ENCODE measurements at regions of chr9 and their contacts with region 1.

Region 1: DNA sequence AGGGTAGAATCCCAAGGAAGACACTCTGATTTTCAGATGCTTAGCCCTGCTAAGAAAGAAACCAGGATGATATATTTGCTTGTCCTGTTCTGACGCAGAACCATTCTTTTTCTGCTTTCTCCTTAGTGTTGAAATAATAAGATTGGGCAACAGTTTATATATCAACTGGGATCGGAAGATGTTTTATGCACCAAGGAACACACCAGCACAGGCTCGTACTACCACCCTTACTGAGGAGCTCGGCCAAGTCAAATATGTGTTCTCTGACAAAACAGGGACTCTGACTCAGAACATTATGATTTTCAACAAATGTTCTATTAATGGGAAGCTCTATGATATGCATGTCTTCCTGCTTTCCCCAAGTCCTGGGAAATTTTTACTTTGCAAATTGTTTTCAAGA is 19.0 kb upstream of the RUSC2 start:
- DNase-seq: no peak
- ATAC-seq: no peak
- H3K4me3 ChIP-seq: no peak overlapping the region
- H3K27ac ChIP-seq: no peak overlapping the region
- H3K4me1 ChIP-seq: no peaks in the 10 kb centered on the region
- H3K27me3 ChIP-seq: peaks cover 0 to 3% (median 0%) of the 10 kb centered on the region in 3 donors
- CTCF ChIP-seq: no peak

Region 2: GRCh38 chr9:35211854-35212253 is 259.0 kb before region 1 on chr9:
- intact Hi-C with region 1: no loop called
- DNase-seq: no peak
- ATAC-seq: no peak
- H3K4me3 ChIP-seq: no peak overlapping the region
- H3K27ac ChIP-seq: no peak overlapping the region
- H3K4me1 ChIP-seq: peaks cover 20% of the 10 kb centered on the region
- H3K27me3 ChIP-seq: no peaks in the 10 kb centered on the region
- CTCF ChIP-seq: no peak

Region 3: DNA sequence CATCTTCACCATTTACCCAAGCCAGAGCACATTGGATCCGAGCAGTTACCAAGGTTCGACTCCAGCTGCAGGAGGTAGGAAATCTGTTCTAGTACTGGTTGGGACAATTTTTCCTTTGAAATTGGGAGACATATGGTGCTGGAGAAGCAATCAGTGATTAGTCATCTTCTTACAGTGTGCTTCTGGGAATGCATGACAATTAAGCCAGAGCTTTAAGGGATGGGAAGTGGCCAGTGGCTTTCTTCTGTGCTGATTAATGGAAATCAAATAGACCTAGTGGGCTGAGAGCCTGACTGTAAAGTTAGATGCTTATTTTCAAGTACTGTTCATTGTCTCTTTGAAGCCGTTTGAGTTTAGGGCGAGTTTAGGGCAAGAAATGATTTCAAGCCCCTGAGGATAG is 157.0 kb before region 1 on chr9:
- intact Hi-C with region 1: loop called (anchors 10 kb)
- DNase-seq: no peak
- ATAC-seq: peak in 2 of 4 donors; percentile 26 to 42
- H3K4me3 ChIP-seq: no peak overlapping the region
- H3K27ac ChIP-seq: no peak overlapping the region
- H3K4me1 ChIP-seq: peaks cover 25% of the 10 kb centered on the region
- H3K27me3 ChIP-seq: no peaks in the 10 kb centered on the region
- CTCF ChIP-seq: no peak

Region 4: DNA sequence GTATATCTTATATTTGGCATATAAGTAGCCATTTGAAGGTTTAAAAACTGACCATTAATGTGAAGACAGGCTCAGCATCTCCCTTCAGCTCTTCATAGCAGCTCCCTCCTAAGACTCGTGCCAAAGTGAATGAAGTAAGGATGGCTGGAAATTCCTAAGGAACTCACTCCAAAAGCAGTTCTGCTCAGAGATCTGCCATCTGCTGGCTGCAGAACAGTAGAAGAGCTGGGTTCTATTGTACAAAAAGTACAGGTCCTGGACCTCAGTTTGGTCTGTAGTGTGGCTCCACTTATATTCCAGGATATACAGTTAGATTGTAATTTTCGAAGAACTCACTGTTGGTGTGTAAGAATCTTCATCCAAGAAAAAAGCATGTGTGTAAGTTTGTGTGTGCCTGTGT is 85.9 kb before region 1 on chr9:
- intact Hi-C with region 1: loop called in 1 of 2 experiments (anchors 10 kb)
- DNase-seq: no peak
- ATAC-seq: peak in 2 of 4 donors; percentile 59
- H3K4me3 ChIP-seq: no peak overlapping the region
- H3K27ac ChIP-seq: no peak overlapping the region
- H3K4me1 ChIP-seq: no peaks in the 10 kb centered on the region
- H3K27me3 ChIP-seq: no peaks in the 10 kb centered on the region
- CTCF ChIP-seq: peak; percentile 28

Region 5: DNA sequence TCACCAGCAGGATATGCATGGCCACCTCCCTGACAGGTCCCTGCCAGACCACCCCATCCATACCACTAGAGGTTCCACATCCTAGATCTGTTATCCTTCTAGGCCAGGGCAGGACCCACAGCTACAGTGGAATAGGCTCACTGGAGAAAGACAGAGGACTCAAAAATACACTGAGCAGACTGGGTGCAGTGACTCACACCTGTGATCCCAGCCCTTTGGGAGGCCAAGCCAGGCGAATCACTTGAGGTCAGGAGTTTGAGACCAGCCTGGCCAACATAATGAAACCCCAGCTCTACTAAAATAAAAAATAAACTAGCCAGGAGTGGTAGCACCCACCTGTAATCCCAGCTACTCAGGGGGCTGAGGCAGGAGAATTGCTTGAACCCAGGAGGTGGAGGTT is 77.7 kb after region 1 on chr9:
- intact Hi-C with region 1: no loop called
- DNase-seq: no peak
- ATAC-seq: peak in 2 of 4 donors; percentile 20 to 28
- H3K4me3 ChIP-seq: no peak overlapping the region
- H3K27ac ChIP-seq: peak overlapping the region; percentile 30
- H3K4me1 ChIP-seq: peaks cover 51% of the 10 kb centered on the region
- H3K27me3 ChIP-seq: no peaks in the 10 kb centered on the region
- CTCF ChIP-seq: no peak

Measured in psoas muscle (tissue), 8 donors.